GM12878 (cell line): ENCODE measurements at regions of chr2 and their contacts with region 1.

Region 1: DNA sequence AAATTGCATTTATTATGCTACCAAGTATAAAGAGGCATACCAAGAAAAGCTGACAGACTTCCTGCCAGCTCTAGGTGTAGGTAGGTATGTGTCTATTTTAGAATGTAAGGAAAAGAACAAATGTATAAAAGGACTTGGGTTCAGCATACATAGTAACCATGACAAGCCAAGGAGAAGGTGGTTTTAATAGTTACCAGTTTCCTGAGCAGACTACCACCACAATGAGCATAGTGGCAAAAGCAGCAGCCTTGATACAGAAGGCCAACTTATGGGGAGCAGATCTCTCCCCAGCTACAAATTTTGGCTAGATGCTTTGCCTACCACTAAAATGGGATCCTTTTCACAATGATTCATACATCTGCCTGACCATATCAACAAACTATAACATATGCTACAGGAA is 34.5 kb downstream of the METTL8 start:
- DNase-seq: no peak
- ATAC-seq: peak; percentile 54
- H3K4me3 ChIP-seq: no peak overlapping the region
- H3K27ac ChIP-seq: no peak overlapping the region
- H3K4me1 ChIP-seq: no peaks in the 10 kb centered on the region
- H3K27me3 ChIP-seq: no peaks in the 10 kb centered on the region
- CTCF ChIP-seq: no peak
- EP300 ChIP-seq: no peak
- POLR2A ChIP-seq: no peak
- RAD21 ChIP-seq: no peak

Region 2: DNA sequence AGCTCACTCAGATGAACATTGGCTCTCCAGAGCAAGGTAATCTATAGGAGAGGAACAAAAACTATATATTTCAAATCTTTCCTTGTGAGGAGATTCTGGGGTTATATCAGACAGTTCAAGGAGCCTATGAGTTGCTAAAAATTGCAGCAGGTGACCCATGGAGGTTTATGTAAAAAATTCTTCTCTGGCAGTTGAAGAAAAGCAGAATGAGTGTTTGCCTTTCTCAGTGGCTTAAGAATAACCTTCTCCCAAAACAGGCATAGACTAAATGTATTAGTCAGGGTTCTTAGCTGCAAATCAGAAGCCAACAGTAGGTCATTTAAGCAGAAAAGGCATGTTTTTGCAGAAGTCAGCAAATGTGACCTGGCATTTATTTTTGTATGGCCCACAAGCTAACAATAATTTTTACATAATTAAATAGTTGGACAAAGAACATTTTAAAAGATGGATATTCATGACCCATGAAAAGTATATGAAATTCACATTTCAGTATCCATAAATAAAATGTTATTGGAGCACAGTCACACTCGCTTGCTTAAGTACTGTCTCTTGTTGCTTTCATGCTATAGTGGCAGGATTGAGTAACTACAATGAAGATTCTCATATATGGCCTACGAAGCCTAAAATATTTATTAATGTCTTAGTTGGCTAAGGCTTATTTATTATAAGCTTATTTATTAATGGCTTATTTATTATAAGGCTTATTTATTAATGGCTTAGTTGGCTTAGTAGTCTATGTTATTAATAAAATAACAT is 145.2 kb before region 1 on chr2:
- CTCF ChIA-PET with region 1: no interaction called
- POLR2A ChIA-PET with region 1: interaction called, 11 read pairs
- RAD21 ChIA-PET with region 1: no interaction called
- SMC1A ChIA-PET with region 1: no interaction called
- in situ Hi-C with region 1: no loop called
- intact Hi-C with region 1: no loop called
- DNase-seq: no peak
- ATAC-seq: no peak
- H3K4me3 ChIP-seq: no peak overlapping the region
- H3K27ac ChIP-seq: no peak overlapping the region
- H3K4me1 ChIP-seq: peaks cover 8% of the 10 kb centered on the region; the same call in 1 of the 2 replicates
- H3K27me3 ChIP-seq: no peaks in the 10 kb centered on the region
- CTCF ChIP-seq: no peak
- EP300 ChIP-seq: no peak
- POLR2A ChIP-seq: no peak
- RAD21 ChIP-seq: no peak